ENCODE measurements at regions of chr17 and their contacts with region 1.

Region 1: DNA sequence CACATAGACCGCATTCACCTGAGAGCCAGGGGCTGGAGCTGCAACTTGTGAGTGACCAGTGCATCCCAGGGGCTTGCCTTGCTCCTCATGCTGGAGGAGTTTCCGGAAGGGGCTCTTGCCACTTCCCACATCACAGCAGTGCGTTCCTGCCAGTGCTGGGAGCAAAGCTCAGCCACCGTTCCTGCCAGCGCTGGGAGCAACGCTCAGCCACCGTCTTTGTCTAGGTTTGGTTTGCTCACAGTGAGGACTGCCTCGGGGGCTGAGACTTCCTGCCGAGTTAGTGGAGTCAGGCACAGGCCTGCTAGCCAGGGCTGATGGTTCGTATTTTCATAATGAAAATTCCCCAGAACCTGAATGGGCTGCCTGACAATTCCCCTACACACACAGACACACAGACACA is 5.4 kb upstream of the CHRNE start:
- DNase-seq: no peak
- H3K4me3 ChIP-seq: no peak overlapping the region
- H3K27ac ChIP-seq: no peak overlapping the region
- H3K4me1 ChIP-seq: peaks cover 3% of the 10 kb centered on the region
- CTCF ChIP-seq: no peak

Region 2: GRCh38 chr17:4881761-4882555 is 26.3 kb before region 1 on chr17:
- CTCF ChIA-PET with region 1: no interaction called
- POLR2A ChIA-PET with region 1: no interaction called
- intact Hi-C with region 1: no loop called
- DNase-seq: peak; percentile 65
- H3K4me3 ChIP-seq: no peak overlapping the region
- H3K27ac ChIP-seq: no peak overlapping the region
- H3K4me1 ChIP-seq: peaks cover 6% of the 10 kb centered on the region
- CTCF ChIP-seq: peak; percentile 92

Region 3: GRCh38 chr17:4892343-4893182 is 15.7 kb before region 1 on chr17:
- CTCF ChIA-PET with region 1: no interaction called
- POLR2A ChIA-PET with region 1: no interaction called
- intact Hi-C with region 1: no loop called
- DNase-seq: no peak
- H3K4me3 ChIP-seq: no peak overlapping the region
- H3K27ac ChIP-seq: no peak overlapping the region
- H3K4me1 ChIP-seq: no peaks in the 10 kb centered on the region
- CTCF ChIP-seq: no peak

Region 4: DNA sequence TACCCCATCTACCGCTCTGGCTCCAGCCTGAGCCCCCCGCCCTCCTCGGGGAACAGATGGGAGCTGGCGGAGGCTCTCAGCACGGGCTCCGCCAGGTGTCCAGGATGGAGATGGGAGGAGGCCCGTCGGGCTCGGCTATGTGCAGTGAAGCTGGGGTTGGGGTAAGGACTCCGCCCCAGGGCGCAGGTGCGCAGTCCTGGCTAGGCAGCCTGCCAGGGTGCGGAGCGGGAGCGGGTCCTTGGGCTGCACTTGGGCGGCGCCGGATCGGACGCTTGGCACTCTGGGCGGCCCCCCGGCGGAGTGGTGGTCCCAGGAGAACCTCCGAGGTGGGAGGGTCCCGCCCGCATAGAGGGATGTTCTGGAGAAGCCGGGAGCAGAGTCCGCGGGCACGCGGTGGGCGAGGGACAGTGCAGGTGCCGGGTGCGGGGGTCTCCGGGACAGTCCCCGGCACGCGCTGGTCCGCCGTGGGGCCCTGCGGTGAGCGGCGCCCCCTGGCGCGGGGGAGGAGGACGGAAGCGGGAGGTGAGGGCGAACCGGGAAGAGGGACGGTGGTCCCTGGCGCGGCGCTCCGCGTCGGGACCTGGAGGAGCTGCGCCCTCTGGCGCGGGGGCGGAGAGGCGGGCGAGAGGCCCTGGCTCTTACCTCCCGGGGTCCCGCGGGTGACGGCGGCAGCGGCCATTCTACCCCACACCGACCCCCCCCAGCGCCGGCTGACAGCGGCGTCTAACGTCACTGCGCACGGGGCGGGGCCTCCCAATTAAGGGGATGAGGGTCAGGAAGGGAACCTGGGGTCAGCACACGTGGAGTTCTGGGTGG is 78.9 kb after region 1 on chr17 and contains the start of gene CAMTA2:
- CTCF ChIA-PET with region 1: no interaction called
- POLR2A ChIA-PET with region 1: no interaction called
- intact Hi-C with region 1: loop called (anchors 5 kb)
- DNase-seq: peak; percentile 85
- H3K4me3 ChIP-seq: peak within 1 kb of the TSS; percentile 93
- H3K27ac ChIP-seq: peak within 1 kb of the TSS; percentile 48
- H3K4me1 ChIP-seq: peaks cover 27% of the 10 kb centered on the region
- CTCF ChIP-seq: peak; percentile 89
- total RNA-seq, gene CAMTA2: 8.7 and 9.7 TPM in 2 replicates